CD4-positive, alpha-beta T cell (primary cell): ENCODE measurements at regions of chr22 and their contacts with region 1.

Region 1: DNA sequence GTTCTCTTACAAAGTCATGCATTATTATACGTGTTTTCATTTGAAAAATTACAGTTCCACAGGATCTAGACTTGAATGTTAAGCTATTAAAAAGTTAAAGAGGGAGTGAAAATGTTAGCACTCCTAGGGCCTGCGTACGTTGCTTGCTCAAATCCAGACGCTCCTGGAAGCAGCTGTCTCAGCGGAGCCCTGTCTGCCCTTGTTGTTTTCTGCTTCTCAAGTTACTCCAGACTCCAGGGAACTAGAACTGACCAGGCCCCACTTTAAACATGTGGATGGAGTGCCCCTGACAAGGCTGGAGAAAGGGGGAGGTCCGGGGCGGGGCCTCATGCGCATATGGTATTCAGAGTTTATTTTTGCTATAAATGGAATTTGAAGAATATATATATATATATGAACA is 9.6 kb downstream of the PARVB start:
- DNase-seq: no peak
- ATAC-seq: no peak
- H3K4me3 ChIP-seq: no peak overlapping the region
- H3K4me3 Mint-ChIP-seq: no peak overlapping the region
- H3K27ac ChIP-seq: no peak overlapping the region
- H3K27ac Mint-ChIP-seq: no peak overlapping the region
- H3K4me1 ChIP-seq: peaks cover 28% of the 10 kb centered on the region
- H3K4me1 Mint-ChIP-seq: peaks cover 21% of the 10 kb centered on the region
- H3K27me3 ChIP-seq: no peaks in the 10 kb centered on the region
- H3K27me3 Mint-ChIP-seq: peaks cover 5% of the 10 kb centered on the region
- CTCF ChIP-seq: no peak

Region 2: GRCh38 chr22:43681731-43682360 is 351.8 kb before region 1 on chr22:
- CTCF ChIA-PET with region 1: no interaction called
- POLR2A ChIA-PET with region 1: no interaction called
- intact Hi-C with region 1: loop called in 1 of 2 experiments (anchors 5 kb)
- DNase-seq: no peak
- ATAC-seq: no peak
- H3K4me3 ChIP-seq: no peak overlapping the region
- H3K4me3 Mint-ChIP-seq: no peak overlapping the region
- H3K27ac ChIP-seq: no peak overlapping the region
- H3K27ac Mint-ChIP-seq: no peak overlapping the region
- H3K4me1 ChIP-seq: no peaks in the 10 kb centered on the region
- H3K4me1 Mint-ChIP-seq: no peaks in the 10 kb centered on the region
- H3K27me3 ChIP-seq: peaks cover 0 to 5% of the 10 kb centered on the region in 2 experiments
- H3K27me3 Mint-ChIP-seq: peaks cover 22% of the 10 kb centered on the region
- CTCF ChIP-seq: no peak

Region 3: GRCh38 chr22:44098083-44098739 is 64.5 kb after region 1 on chr22:
- CTCF ChIA-PET with region 1: no interaction called
- POLR2A ChIA-PET with region 1: no interaction called
- intact Hi-C with region 1: no loop called
- DNase-seq: no peak
- ATAC-seq: no peak
- H3K4me3 ChIP-seq: no peak overlapping the region
- H3K4me3 Mint-ChIP-seq: no peak overlapping the region
- H3K27ac ChIP-seq: no peak overlapping the region
- H3K27ac Mint-ChIP-seq: no peak overlapping the region
- H3K4me1 ChIP-seq: no peaks in the 10 kb centered on the region
- H3K4me1 Mint-ChIP-seq: no peaks in the 10 kb centered on the region
- H3K27me3 ChIP-seq: no peaks in the 10 kb centered on the region
- H3K27me3 Mint-ChIP-seq: no peaks in the 10 kb centered on the region
- CTCF ChIP-seq: no peak

Region 4: GRCh38 chr22:44159221-44159620 is 125.5 kb after region 1 on chr22:
- CTCF ChIA-PET with region 1: no interaction called
- POLR2A ChIA-PET with region 1: no interaction called
- intact Hi-C with region 1: no loop called
- DNase-seq: no peak
- ATAC-seq: no peak
- H3K4me3 ChIP-seq: no peak overlapping the region
- H3K4me3 Mint-ChIP-seq: no peak overlapping the region
- H3K27ac ChIP-seq: no peak overlapping the region
- H3K27ac Mint-ChIP-seq: no peak overlapping the region
- H3K4me1 ChIP-seq: no peaks in the 10 kb centered on the region
- H3K4me1 Mint-ChIP-seq: no peaks in the 10 kb centered on the region
- H3K27me3 ChIP-seq: no peaks in the 10 kb centered on the region
- H3K27me3 Mint-ChIP-seq: no peaks in the 10 kb centered on the region
- CTCF ChIP-seq: no peak